ENCODE measurements at regions of chr7 and their contacts with region 1.

Region 1: DNA sequence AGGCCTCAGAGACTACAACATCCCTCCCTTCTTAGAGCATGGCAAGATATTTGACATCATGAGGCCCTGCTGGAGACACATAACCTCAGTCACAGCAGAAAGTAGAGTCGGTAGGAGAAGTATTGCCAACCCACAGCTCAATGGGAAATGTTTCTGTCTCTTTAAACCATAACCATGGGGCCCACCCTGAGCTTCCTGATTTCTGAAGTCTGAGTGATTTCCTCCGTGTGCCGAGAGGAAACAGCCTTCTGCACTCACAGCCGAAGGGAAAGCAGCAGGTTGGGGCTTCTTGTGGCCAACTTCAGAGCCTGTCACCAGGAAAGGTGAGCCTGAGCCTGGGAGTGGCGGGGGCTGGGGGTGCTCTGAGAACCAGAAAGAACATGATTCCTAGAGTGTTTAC is at the start of gene GIMAP1:
- DNase-seq: peak; percentile 74 to 80 (median 79)
- H3K4me3 ChIP-seq: peak within 1 kb of the TSS; percentile 74 to 83
- H3K4me3 Mint-ChIP-seq: peak within 1 kb of the TSS; percentile 94 to 100 (median 98)
- H3K27ac ChIP-seq: peak within 1 kb of the TSS; percentile 74
- H3K27ac Mint-ChIP-seq: peak within 1 kb of the TSS; percentile 88 to 98 (median 97)
- H3K4me1 ChIP-seq: peaks cover 56% of the 10 kb centered on the region
- H3K4me1 Mint-ChIP-seq: peaks cover 48 to 79% (median 65%) of the 10 kb centered on the region in 4 donors
- H3K27me3 ChIP-seq: no peaks in the 10 kb centered on the region
- H3K27me3 Mint-ChIP-seq: no peaks in the 10 kb centered on the region
- total RNA-seq, gene GIMAP1: 93.7 to 97.6 TPM

Region 2: DNA sequence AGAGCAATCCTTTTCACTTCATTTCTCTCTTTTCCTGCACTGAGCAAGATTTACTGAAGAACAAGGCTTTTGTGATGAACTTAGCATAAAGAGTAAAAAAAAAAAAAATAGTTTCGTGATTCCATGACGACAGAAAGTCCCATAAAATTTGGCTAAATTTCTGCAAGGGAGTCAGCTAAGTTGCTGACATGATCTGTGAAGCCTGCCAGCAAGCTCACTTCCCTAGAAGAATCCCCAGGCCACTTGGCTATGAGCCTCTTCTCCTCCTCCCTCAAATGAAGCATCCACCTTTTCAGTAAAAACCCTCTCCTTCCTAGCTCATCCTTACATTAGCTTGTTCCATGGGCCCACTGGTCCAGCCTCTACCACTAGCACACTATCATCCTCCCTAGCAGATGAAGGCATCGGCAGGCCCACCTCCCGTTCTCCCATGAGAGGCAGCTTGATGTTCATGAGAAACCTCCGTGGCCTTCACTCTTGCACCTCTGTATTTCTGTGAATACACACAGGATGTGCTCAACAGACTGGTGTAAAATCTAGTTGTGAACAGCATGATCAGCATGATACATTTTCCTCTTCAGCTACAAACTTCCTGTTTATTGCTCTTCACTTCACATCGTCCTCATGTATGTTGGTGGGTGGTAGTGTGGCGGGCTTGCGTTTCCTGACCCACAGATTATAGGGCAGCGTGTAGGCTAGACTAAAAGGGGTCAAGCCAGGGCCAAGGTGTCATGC is 235.0 kb before region 1 on chr7:
- CTCF ChIA-PET with region 1: no interaction called
- POLR2A ChIA-PET with region 1: interaction called, 21 read pairs
- intact Hi-C with region 1: no loop called
- DNase-seq: peak; percentile 63 to 87 (median 69)
- H3K4me3 ChIP-seq: peak overlapping the region in 1 of 2 donors; percentile 37
- H3K4me3 Mint-ChIP-seq: peak overlapping the region; percentile 80 to 90 (median 88)
- H3K27ac ChIP-seq: peak overlapping the region; percentile 71
- H3K27ac Mint-ChIP-seq: peak overlapping the region; percentile 96 to 100 (median 99)
- H3K4me1 ChIP-seq: peaks cover 99% of the 10 kb centered on the region
- H3K4me1 Mint-ChIP-seq: peaks cover 75 to 98% (median 91%) of the 10 kb centered on the region in 4 donors
- H3K27me3 ChIP-seq: no peaks in the 10 kb centered on the region
- H3K27me3 Mint-ChIP-seq: no peaks in the 10 kb centered on the region

Region 3: GRCh38 chr7:150620617-150621371 is 95.6 kb before region 1 on chr7:
- CTCF ChIA-PET with region 1: no interaction called
- POLR2A ChIA-PET with region 1: interaction called, 172 read pairs
- intact Hi-C with region 1: no loop called
- DNase-seq: no peak
- H3K4me3 ChIP-seq: no peak overlapping the region
- H3K4me3 Mint-ChIP-seq: peak overlapping the region; percentile 2 to 63 (median 44)
- H3K27ac ChIP-seq: no peak overlapping the region
- H3K27ac Mint-ChIP-seq: peak overlapping the region; percentile 70 to 92 (median 86)
- H3K4me1 ChIP-seq: peaks cover 41% of the 10 kb centered on the region
- H3K4me1 Mint-ChIP-seq: peaks cover 42 to 61% (median 54%) of the 10 kb centered on the region in 4 donors
- H3K27me3 ChIP-seq: no peaks in the 10 kb centered on the region
- H3K27me3 Mint-ChIP-seq: no peaks in the 10 kb centered on the region

Region 4: DNA sequence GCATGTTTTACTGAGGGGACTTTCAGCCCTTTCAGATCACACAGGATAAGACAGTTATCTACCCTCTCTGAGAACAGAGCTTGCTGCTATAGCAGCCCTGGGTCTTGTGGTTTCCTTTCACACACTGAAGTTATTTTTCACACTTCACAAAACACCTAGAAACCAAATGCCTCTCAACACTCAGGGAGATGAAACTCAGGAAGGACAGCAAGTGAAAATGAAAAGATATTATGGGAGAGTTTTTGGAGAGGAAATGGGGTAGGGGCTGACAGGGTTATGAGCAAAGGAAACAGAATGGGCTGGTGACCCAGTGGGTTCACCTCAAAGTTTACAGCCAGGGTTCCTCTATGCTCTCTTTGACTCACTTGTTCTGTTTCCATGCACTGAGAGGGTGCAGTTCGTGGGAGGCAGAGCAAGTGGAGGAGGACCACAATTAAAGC is 47.9 kb before region 1 on chr7:
- CTCF ChIA-PET with region 1: interaction called, 4 read pairs
- POLR2A ChIA-PET with region 1: interaction called, 71 read pairs
- intact Hi-C with region 1: loop called (anchors 5 kb)
- DNase-seq: peak; percentile 80 to 88 (median 85)
- H3K4me3 ChIP-seq: peak overlapping the region; percentile 2 to 26
- H3K4me3 Mint-ChIP-seq: peak overlapping the region; percentile 55 to 84 (median 72)
- H3K27ac ChIP-seq: peak overlapping the region; percentile 68
- H3K27ac Mint-ChIP-seq: peak overlapping the region; percentile 82 to 99 (median 98)
- H3K4me1 ChIP-seq: peaks cover 92% of the 10 kb centered on the region
- H3K4me1 Mint-ChIP-seq: peaks cover 63 to 95% (median 79%) of the 10 kb centered on the region in 4 donors
- H3K27me3 ChIP-seq: no peaks in the 10 kb centered on the region
- H3K27me3 Mint-ChIP-seq: no peaks in the 10 kb centered on the region

Region 5: GRCh38 chr7:150685219-150686029 is 30.9 kb before region 1 on chr7 and contains the start of gene GIMAP2:
- CTCF ChIA-PET with region 1: interaction called, 29 read pairs
- POLR2A ChIA-PET with region 1: interaction called, 167 read pairs
- intact Hi-C with region 1: loop called (anchors 2 kb)
- DNase-seq: peak; percentile 64 to 69 (median 65)
- H3K4me3 ChIP-seq: peak within 1 kb of the TSS; percentile 80 to 97
- H3K4me3 Mint-ChIP-seq: peak within 1 kb of the TSS; percentile 94 to 99 (median 98)
- H3K27ac ChIP-seq: peak within 1 kb of the TSS; percentile 90
- H3K27ac Mint-ChIP-seq: peak within 1 kb of the TSS; percentile 90 to 99 (median 97)
- H3K4me1 ChIP-seq: peaks cover 60% of the 10 kb centered on the region
- H3K4me1 Mint-ChIP-seq: peaks cover 55 to 97% (median 74%) of the 10 kb centered on the region in 4 donors
- H3K27me3 ChIP-seq: no peaks in the 10 kb centered on the region
- H3K27me3 Mint-ChIP-seq: no peaks in the 10 kb centered on the region
- total RNA-seq, gene GIMAP2: 238 to 244 TPM

Region 6: GRCh38 chr7:150703209-150703608 is 13.2 kb before region 1 on chr7:
- CTCF ChIA-PET with region 1: interaction called, 31 read pairs
- POLR2A ChIA-PET with region 1: interaction called, 136 read pairs
- intact Hi-C with region 1: no loop called
- DNase-seq: no peak
- H3K4me3 ChIP-seq: no peak overlapping the region
- H3K4me3 Mint-ChIP-seq: peak overlapping the region in 1 of 8 donors; percentile 4
- H3K27ac ChIP-seq: no peak overlapping the region
- H3K27ac Mint-ChIP-seq: no peak overlapping the region
- H3K4me1 ChIP-seq: no peaks in the 10 kb centered on the region
- H3K4me1 Mint-ChIP-seq: peaks cover 5 to 15% (median 9%) of the 10 kb centered on the region in 4 donors
- H3K27me3 ChIP-seq: no peaks in the 10 kb centered on the region
- H3K27me3 Mint-ChIP-seq: no peaks in the 10 kb centered on the region

Region 7: DNA sequence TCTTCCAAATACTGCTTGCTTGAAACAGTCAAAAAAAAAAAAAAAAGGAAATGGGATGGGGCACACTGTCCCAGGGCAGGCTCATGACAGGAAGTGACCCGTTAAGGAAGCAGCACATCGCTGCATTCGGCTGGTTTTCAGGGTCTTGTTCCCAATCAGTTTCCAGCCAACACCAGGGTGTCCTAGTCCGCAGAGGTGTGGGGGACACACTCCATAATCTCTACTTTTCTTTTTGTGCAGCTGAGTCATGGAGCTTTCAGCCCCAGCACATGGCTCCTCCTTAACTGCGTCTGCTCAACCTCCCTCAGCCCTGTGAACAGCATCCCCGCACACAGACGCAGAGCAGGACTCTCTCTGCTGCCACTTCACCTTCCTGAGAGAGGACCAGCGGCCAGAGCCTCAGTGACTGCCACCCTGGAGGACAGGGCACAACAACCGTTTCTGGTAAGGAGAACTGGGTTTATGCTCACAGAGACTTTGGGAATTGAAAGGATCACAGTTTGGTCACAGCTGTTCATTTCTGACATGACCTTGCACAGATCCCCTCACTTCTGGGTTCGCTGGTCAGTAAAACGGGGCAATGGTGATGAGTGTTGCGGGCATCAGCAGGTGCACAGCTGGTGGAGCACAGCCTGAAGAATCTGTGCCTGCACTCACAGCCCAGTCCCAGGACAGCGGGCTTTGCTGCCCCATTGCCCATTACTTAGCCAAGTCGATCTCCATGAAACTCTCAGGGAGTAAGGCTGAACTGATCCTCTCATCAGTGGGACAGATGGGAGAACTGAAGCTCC is 21.1 kb after region 1 on chr7 and contains the start of gene GIMAP5:
- CTCF ChIA-PET with region 1: interaction called, 26 read pairs
- POLR2A ChIA-PET with region 1: interaction called, 593 read pairs
- intact Hi-C with region 1: loop called (anchors 1 kb)
- DNase-seq: peak in 4 of 5 donors; percentile 58 to 74 (median 61)
- H3K4me3 ChIP-seq: peak within 1 kb of the TSS; percentile 81 to 82
- H3K4me3 Mint-ChIP-seq: peak within 1 kb of the TSS; percentile 92 to 100 (median 98)
- H3K27ac ChIP-seq: peak within 1 kb of the TSS; percentile 83
- H3K27ac Mint-ChIP-seq: peak within 1 kb of the TSS; percentile 86 to 98 (median 96)
- H3K4me1 ChIP-seq: peaks cover 64% of the 10 kb centered on the region
- H3K4me1 Mint-ChIP-seq: peaks cover 55 to 94% (median 64%) of the 10 kb centered on the region in 4 donors
- H3K27me3 ChIP-seq: no peaks in the 10 kb centered on the region
- H3K27me3 Mint-ChIP-seq: no peaks in the 10 kb centered on the region
- total RNA-seq, gene GIMAP5: 296 to 297 TPM

Region 8: GRCh38 chr7:152050547-152050971 is 1334.2 kb after region 1 on chr7:
- CTCF ChIA-PET with region 1: no interaction called
- POLR2A ChIA-PET with region 1: no interaction called
- intact Hi-C with region 1: no loop called
- DNase-seq: no peak
- H3K4me3 ChIP-seq: no peak overlapping the region
- H3K4me3 Mint-ChIP-seq: no peak overlapping the region
- H3K27ac ChIP-seq: no peak overlapping the region
- H3K27ac Mint-ChIP-seq: peak overlapping the region in 1 of 7 donors; percentile 23
- H3K4me1 ChIP-seq: no peaks in the 10 kb centered on the region
- H3K4me1 Mint-ChIP-seq: peaks cover 8 to 19% (median 17%) of the 10 kb centered on the region in 4 donors
- H3K27me3 ChIP-seq: no peaks in the 10 kb centered on the region
- H3K27me3 Mint-ChIP-seq: no peaks in the 10 kb centered on the region